ENCODE measurements at regions of chr1 and their contacts with region 1.

Region 1: DNA sequence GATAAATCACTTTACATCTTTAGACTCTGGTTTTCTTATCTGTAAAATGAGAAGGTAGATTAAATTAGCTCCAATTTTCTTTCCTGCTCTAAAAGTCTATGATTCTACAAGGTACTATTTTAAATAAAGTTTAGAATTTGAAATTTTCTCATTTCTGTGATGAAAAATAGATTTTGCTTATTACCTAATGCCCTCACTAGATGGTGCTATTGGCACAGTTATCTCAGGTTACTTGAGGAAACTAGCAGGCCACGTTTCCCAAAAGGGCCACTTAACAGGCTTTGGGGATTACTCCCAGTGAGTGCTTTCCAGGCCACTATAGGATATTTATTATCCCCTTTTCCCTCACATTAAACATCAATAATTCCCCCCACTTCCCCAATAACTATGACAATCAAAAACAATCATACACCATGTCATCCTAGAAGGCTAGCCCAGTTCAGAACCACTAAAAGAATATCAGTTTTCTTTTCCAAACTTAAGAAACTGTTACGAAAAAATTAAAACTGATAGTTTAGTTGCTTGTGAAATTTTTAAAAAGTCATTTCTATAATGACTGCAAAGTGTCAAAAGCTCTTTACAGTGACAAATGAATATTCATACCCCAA is 30.6 kb downstream of the OMA1 start:
- DNase-seq: peak in 4 of 5 donors; percentile 8 to 41 (median 22)
- H3K4me3 ChIP-seq: no peak overlapping the region
- H3K27ac ChIP-seq: no peak overlapping the region
- H3K4me1 ChIP-seq: no peaks in the 10 kb centered on the region
- H3K27me3 ChIP-seq: no peaks in the 10 kb centered on the region
- CTCF ChIP-seq: peak; percentile 48 to 84 (median 71)
- EP300 ChIP-seq: no peak
- POLR2A ChIP-seq: no peak

Region 2: DNA sequence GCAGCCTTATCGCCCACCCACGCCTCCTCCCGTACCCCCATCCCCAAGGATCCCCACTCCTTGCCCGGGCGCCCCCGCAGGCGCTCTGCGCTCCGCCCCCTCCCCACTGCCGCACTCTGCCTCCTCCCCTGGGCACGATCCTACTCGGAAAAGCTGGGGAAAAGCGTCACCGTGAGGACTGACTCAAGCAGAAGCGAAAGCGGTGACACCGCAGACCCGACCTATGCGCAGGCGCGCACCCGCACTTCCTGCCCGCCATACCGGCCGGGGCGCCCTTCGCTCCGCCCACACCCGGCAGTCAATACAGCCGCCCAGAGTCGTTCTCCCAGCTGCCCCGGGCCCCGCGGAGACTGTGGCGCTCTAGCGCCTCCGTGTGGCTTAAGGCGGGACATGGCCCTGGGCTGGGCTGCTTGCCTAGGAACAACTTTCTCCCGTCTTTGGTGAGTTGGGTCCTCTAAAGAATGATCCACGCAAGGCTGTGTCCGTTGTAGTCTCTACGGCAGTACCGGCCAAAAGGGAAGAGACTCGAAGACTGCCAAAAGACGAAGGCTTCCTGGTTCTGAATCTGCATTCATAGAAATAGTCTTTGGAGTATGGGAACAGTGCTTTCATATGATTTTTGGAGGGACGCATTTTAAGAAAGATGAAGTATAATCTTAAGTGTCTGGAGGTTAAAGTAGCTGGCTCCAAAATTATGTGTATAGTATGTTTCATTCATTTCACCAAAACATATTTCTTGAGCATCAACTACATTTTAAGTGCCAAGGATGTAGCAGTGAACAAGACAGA is 30.8 kb after region 1 on chr1 and contains the start of gene OMA1:
- intact Hi-C with region 1: loop called in 1 of 4 experiments (anchors 5 kb)
- DNase-seq: peak; percentile 97 to 99 (median 97)
- H3K4me3 ChIP-seq: peak within 1 kb of the TSS; percentile 73
- H3K27ac ChIP-seq: peak within 1 kb of the TSS; percentile 98 to 100
- H3K4me1 ChIP-seq: peaks cover 6% of the 10 kb centered on the region
- H3K27me3 ChIP-seq: no peaks in the 10 kb centered on the region
- CTCF ChIP-seq: peak; percentile 96 to 98 (median 98)
- EP300 ChIP-seq: no peak
- POLR2A ChIP-seq: peak; percentile 89
- total RNA-seq, gene OMA1: 29.8 to 51.5 (median 36.2) TPM

Region 3: DNA sequence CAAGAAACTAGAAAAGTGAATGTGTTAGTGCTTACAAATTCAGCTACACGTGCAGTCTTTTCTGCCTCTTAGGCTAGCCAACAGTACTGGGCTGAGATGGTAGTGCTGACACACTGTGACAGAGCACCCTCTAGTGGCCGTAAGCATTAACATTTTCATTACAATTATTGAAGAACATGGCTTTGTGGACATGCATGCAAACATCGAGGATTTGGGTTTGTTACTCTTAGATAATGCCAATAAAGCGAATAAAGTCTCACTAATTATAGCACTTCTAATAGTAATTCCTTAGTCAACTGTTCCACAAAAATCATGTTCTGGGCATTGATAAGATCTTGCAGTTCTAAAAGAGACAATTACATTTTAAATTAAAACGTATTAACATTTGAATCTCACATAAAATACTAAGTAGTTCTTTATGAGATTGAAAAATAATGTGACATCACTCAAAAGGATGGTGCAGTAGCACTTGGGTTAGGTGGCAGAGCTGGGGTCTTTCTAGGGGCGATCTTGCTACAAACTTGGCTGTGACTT is 136.8 kb after region 1 on chr1:
- intact Hi-C with region 1: loop called in 3 of 4 experiments (anchors 1 to 10 kb)
- DNase-seq: peak; percentile 34 to 62 (median 44)
- H3K4me3 ChIP-seq: no peak overlapping the region
- H3K27ac ChIP-seq: no peak overlapping the region
- H3K4me1 ChIP-seq: no peaks in the 10 kb centered on the region
- H3K27me3 ChIP-seq: no peaks in the 10 kb centered on the region
- CTCF ChIP-seq: peak; percentile 61 to 73 (median 66)
- EP300 ChIP-seq: no peak
- POLR2A ChIP-seq: no peak

Measured in ovary (tissue), 10 donors.